GM13976 (cell line): ENCODE measurements at regions of chr5 and their contacts with region 1.

Region 1: DNA sequence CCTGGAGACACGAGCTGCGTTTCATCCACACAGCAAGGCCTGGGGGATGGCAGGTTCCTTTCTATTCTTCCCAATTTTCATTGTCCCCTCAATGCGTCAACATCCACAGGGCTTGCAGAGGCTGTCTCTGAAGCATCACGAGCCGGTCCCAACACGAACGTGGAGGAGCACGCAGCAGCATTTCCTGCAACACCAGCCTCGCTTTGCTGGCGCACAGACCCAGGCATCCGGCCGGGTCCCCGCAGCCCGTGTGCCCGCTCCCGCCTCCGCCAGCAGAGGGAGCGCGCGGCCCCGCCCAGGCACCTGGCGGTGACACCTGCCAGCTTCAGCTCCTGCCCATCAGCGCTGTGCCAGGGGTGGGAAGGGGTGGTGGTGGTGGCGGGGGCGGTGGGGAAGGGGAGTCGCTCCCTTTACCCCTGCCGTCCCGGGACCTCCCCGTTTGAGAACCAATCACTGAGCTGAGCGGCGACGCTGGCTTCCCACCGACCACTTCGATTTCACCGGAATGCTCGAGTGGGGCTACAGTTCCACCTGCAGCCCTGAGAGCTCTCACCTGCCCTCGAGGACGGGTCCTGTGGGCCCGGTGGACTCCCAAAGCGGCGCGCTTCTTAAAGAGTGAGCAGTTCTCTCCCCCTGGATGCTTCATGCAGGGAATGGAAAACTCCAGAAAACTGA is 464.5 kb downstream of the ICE1 start:
- DNase-seq: peak; percentile 83
- CTCF ChIP-seq: peak; percentile 94

Region 2: DNA sequence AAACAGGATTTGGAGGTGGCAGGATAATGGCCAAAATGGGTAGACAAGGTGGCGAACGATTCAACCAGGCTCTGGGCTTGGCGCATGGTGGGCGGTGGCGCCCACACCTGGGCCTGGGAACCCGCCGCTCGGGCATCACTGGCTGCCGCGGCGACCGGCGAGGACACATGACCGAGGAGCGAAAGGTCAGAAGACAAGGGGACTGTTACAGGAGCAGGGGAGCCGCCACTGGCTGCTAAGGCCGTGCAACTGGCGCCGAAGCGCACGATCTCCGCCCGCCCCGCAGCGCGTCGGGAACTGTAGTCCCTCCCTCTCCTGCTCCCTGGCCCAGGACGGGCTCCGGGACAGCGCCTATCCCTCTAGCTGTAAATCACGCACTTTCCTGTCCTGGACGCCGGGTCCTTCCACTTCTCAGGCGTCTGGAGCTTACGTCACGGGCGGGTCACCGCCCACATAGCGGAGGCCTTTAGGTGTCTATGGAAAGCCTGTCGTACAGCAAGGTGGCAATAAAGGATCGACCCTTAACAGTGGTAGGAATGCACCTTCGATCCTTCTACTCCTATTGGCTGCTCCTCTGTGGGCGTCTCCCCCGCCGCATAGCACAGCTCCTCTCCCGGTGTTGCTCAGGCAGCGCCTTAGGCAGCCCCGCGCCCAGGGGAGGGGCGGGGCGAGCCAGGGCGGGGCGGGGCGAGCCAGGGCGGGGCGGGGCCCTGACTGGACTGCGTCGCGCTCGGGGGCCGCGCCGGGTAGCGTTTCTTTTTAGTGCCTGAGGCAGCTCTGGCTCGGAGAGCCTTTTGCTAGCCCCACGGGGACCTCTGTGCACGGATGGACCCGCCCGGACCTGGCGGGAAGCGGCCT is 464.8 kb before region 1 on chr5 and contains the start of gene ICE1:
- in situ Hi-C with region 1: no loop called
- DNase-seq: peak; percentile 92
- CTCF ChIP-seq: no peak

Region 3: DNA sequence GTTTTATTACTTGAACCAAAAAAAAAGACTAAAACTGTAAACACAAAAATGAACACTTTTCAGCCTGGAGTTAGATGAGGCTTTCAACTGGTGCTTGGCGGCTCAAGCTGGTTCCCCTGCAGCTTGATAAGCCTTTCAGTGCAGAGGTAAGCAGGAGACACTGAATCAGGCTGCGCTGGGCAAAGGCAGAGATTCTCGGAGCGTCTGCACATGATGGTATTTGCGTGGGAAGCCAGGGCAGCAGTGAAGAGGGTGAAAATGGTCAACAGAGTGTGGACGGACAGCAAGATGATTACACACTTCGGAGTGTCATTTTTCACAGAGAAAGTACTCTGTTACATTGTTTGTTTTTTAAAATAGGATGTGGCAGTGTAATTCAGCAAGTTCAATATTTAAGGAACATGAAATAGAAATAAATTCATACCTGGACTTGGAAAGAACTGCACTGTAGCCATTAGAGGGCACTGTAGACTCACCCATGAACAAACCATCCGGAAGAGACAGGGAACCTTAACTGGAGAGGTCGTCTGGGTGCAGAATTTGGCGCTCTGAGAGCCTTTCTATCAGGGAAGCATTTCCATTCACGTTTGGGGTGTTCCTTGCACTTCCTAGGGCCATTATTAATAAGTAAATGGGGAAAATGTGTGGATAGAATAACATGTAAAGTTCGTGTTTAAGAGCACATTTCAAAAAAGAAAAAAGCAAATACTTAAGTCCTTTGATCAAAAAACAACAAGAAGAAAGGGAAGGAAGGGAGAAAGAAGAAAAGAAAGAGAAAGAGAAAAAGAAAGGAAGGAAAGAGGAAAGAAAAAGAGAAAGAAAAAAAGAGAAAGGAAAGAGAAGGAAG is 394.6 kb before region 1 on chr5:
- in situ Hi-C with region 1: loop called (anchors 25 kb)
- DNase-seq: peak; percentile 71
- CTCF ChIP-seq: peak; percentile 67

Region 4: DNA sequence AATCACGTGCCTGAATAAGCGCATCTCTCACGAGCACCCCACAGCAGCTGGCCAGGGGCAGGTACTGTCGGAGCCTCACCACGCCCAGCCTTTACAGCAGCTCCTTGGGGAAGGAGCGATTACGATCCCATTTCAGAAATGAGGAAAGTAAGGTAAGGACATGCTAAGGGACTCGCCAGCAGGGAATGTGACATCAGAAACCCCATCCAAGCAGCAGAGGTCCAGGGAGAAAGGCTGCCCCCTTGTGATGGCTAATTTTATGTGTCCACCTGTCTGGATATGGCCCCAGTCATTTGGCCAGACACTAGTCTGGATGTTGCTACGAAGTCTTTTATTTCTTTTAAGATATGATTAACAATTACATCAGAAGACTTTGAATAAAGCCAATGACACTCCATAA is 639.0 kb after region 1 on chr5:
- in situ Hi-C with region 1: loop called (anchors 25 kb)
- DNase-seq: peak; percentile 78
- CTCF ChIP-seq: peak; percentile 38